ENCODE measurements at regions of chr20 and their contacts with region 1.

Region 1: GRCh38 chr20:5788385-5788895 is 38.2 kb downstream of the SHLD1 start:
- DNase-seq: peak; percentile 87
- ATAC-seq: peak; percentile 99
- H3K4me3 Mint-ChIP-seq: no peak overlapping the region
- H3K27ac Mint-ChIP-seq: no peak overlapping the region
- H3K4me1 Mint-ChIP-seq: peaks cover 11% of the 10 kb centered on the region
- H3K27me3 Mint-ChIP-seq: no peaks in the 10 kb centered on the region

Region 2: GRCh38 chr20:5550733-5551529 is 237.5 kb before region 1 on chr20:
- CTCF ChIA-PET with region 1: interaction called, 17 read pairs
- POLR2A ChIA-PET with region 1: no interaction called
- intact Hi-C with region 1: no loop called
- DNase-seq: no peak
- ATAC-seq: peak; percentile 33
- H3K4me3 Mint-ChIP-seq: no peak overlapping the region
- H3K27ac Mint-ChIP-seq: no peak overlapping the region
- H3K4me1 Mint-ChIP-seq: peaks cover 33% of the 10 kb centered on the region
- H3K27me3 Mint-ChIP-seq: no peaks in the 10 kb centered on the region

Region 3: DNA sequence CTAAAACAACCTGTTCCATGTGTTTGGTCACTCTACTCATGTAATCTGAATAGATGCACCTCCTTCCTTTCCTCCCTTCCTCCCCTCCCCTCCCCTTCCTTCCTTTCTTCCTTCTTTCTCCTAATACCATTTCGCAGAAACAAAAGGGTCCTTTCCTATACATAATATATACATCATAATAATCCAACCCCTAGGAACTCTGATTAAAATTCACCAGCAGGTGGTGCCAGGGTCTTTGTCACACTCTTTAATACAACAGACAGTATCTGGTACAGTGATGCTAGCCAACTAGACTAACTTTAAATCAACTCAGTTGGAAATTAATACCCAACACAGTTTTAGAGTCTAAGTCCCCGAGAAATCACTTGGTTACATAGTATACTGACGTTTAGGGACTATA is 219.4 kb before region 1 on chr20:
- CTCF ChIA-PET with region 1: interaction called, 113 read pairs
- POLR2A ChIA-PET with region 1: interaction called, 4 read pairs
- intact Hi-C with region 1: loop called (anchors 1 kb)
- DNase-seq: peak; percentile 68
- ATAC-seq: peak; percentile 89
- H3K4me3 Mint-ChIP-seq: no peak overlapping the region
- H3K27ac Mint-ChIP-seq: peak overlapping the region; percentile 23
- H3K4me1 Mint-ChIP-seq: peaks cover 36% of the 10 kb centered on the region
- H3K27me3 Mint-ChIP-seq: no peaks in the 10 kb centered on the region

Region 4: DNA sequence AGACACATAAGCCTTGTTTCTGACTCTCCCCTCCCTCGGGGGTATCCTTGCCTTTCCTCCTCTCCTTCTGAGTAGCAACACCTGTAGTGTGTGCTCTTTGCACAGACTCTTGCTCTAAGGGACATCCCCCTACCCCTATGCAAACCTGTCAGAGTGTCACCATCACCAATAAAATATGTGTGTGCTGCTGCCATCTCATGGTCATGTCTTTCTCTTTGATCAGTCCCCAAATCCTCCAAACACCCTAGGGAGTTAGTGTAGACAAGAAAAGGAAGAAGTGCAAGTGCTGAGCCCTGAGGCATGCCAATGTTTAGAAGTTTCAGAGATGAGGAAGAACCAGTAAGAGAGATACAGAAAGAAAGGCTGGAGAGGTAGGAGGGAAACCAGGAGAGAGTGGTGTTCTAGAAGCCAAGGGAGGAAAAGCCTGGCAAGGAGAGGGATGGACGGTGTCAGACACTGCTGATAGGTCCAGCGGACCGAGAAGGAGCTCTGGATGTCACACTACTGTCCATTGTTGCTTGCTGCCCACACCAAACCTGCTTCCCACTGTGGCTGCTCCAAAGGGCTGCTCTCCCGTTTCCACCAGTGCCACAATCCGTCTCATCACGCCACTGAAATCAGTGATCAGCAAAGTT is 145.5 kb after region 1 on chr20:
- CTCF ChIA-PET with region 1: interaction called, 7 read pairs
- POLR2A ChIA-PET with region 1: no interaction called
- intact Hi-C with region 1: loop called in 1 of 2 experiments (anchors 1 kb)
- DNase-seq: peak; percentile 36
- ATAC-seq: peak; percentile 88
- H3K4me3 Mint-ChIP-seq: no peak overlapping the region
- H3K27ac Mint-ChIP-seq: no peak overlapping the region
- H3K4me1 Mint-ChIP-seq: peaks cover 8% of the 10 kb centered on the region
- H3K27me3 Mint-ChIP-seq: no peaks in the 10 kb centered on the region

Region 5: GRCh38 chr20:6034134-6034969 is 245.9 kb after region 1 on chr20:
- CTCF ChIA-PET with region 1: no interaction called
- POLR2A ChIA-PET with region 1: no interaction called
- intact Hi-C with region 1: no loop called
- DNase-seq: no peak
- ATAC-seq: no peak
- H3K4me3 Mint-ChIP-seq: no peak overlapping the region
- H3K27ac Mint-ChIP-seq: peak overlapping the region; percentile 52
- H3K4me1 Mint-ChIP-seq: peaks cover 23% of the 10 kb centered on the region
- H3K27me3 Mint-ChIP-seq: no peaks in the 10 kb centered on the region

Measured in activated CD4-positive, alpha-beta T cell treated with anti-CD3 and anti-CD28 coated beads for 36 hours (primary cell).